Left cardiac atrium (tissue), 4 donors: ENCODE measurements at regions of chr15 and their contacts with region 1.

Region 1: GRCh38 chr15:64749999-64750657 is 25.3 kb downstream of the RBPMS2 start:
- DNase-seq: peak; percentile 71
- ATAC-seq: peak; percentile 57 to 80

Region 2: GRCh38 chr15:64780600-64781156 is 30.6 kb after region 1 on chr15:
- intact Hi-C with region 1: loop called in 1 of 2 experiments (anchors 5 kb)
- DNase-seq: no peak
- ATAC-seq: no peak

Region 3: DNA sequence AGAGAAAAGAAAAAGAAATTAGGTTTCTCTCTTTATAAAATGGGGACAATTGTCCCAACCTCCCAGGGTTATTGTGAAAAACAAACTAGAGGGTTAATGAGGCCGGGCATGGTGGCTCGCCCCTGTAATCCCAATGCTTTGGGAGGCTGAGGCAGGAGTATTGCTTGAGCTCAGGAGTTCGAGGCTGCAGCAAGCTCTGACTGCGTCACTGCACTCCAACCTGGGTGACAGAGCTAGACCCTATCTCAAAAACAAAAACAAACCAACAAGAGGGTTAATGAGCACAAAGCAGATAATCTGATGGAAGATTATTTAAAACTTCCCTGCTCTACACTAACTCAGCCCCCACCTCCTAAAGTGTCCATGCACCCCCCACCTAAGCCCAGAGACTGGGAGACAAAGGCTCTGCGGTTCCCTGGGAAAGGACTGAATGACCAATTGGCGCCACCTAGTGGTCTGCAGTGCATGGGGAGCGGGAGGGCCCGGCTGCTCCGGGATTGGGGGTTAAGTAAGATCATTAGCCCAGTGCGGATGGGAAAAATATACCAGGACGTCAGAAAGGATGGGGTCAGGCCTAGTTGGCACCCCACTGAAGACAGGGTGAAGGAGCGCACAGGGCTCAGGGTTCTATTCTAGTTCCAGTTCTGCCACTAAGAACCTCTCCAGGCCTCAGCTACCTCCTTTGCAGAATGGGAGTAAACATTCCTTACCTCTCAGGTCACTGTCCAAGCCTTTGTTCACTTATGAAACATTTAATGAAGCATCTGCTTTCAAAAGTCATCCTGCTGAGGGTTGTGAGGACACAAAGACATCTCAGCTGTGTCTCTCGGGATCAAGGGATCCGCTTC is 59.7 kb after region 1 on chr15:
- intact Hi-C with region 1: no loop called
- DNase-seq: peak; percentile 87
- ATAC-seq: peak; percentile 82 to 85

Region 4: DNA sequence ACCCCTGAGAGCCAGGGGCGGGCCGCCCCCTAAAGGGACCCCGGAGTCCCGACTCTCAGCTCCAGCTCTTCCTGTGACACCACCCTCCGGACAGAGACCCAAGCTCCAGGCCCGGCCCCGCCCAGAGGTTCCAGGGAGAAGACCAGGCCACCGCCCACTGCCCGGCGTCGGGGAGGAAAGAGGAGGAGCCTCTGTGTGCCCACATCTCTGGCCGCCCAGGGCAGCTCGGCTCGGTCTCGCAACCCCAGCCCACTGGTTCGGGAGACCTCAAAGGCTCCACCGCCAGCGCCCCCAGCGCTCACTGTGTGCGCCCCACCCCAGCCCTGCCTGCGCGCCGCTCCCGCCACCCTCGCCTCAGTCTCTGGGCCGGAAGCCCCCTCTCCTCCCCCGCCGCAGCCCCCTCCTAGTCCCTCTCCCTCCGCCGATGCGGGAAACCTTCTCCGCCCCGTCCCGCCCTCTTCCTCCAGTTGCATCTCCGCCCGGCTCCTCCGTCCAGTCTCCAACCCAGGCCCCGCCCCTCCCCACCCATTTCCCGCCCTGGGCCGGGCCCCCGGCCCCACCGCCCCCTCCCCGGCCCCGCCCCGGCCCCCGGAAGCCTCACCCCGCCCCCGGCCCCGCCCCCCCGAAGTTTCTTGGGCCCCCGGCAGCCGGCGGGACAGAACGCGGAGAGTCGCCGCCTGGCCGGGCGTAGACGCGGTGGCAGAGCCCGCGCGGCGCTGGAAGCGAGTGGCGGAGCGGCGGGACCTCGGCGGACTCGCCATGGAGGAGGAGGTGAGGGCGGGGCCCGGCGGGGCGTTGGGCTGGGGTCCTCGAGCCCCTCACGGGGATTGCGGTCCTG is 91.3 kb after region 1 on chr15 and contains the start of gene PLEKHO2:
- intact Hi-C with region 1: no loop called
- DNase-seq: peak; percentile 98
- ATAC-seq: peak; percentile 90 to 91
- total RNA-seq, gene PLEKHO2: 21.3 to 27.0 TPM